ENCODE measurements at regions of chr10 and their contacts with region 1.

Region 1: DNA sequence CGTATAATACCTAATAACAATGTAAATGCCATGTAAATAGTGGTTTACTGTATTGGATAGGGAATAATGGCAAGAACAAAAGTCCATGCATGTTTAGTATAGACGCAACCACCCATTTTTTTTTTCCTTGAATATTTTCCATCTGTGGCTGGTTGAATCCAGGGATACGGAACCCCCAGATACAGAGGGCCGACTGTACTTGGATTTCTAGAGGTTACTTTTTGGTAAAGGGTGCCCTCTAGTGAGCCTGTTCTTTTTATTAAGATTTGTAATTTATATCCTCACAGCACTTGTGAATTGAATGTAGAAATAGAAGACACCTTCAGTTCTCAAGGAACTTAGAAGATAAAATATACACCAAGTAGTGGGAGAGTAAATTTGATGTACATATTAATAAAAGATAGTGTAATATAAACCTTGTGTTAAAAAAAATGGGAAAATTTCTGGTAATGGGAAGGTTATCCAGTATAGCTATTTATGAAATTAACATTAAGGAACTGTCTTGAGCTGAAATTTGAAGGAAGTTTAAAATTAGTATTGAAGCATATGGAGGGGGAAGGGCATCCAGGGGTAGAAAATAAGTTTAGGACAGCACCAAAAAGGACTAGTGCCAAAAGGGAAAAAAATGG is 32.0 kb downstream of the EXOC6 start:
- DNase-seq: no peak
- H3K4me3 ChIP-seq: no peak overlapping the region
- H3K27ac ChIP-seq: no peak overlapping the region
- H3K4me1 ChIP-seq: peaks cover 0 to 16% (median 6%) of the 10 kb centered on the region in 4 donors
- H3K27me3 ChIP-seq: no peaks in the 10 kb centered on the region
- CTCF ChIP-seq: peak; percentile 47 to 55 (median 55)
- EP300 ChIP-seq: no peak
- POLR2A ChIP-seq: no peak

Region 2: GRCh38 chr10:92517034-92517655 is 363.2 kb before region 1 on chr10:
- intact Hi-C with region 1: loop called (anchors 10 kb)
- DNase-seq: no peak
- H3K4me3 ChIP-seq: no peak overlapping the region
- H3K27ac ChIP-seq: no peak overlapping the region
- H3K4me1 ChIP-seq: peaks cover 0 to 2% (median 0%) of the 10 kb centered on the region in 4 donors
- H3K27me3 ChIP-seq: no peaks in the 10 kb centered on the region
- CTCF ChIP-seq: peak; percentile 74 to 81 (median 78)
- EP300 ChIP-seq: no peak
- POLR2A ChIP-seq: no peak

Region 3: GRCh38 chr10:92573798-92574547 is 306.4 kb before region 1 on chr10 and contains the start of gene IDE:
- intact Hi-C with region 1: loop called (anchors 10 kb)
- DNase-seq: peak; percentile 95
- H3K4me3 ChIP-seq: peak within 1 kb of the TSS; percentile 71 to 97 (median 86)
- H3K27ac ChIP-seq: peak within 1 kb of the TSS; percentile 86 to 95 (median 94)
- H3K4me1 ChIP-seq: peaks cover 21 to 37% (median 34%) of the 10 kb centered on the region in 4 donors
- H3K27me3 ChIP-seq: no peaks in the 10 kb centered on the region
- CTCF ChIP-seq: peak; percentile 71 to 91 (median 74)
- EP300 ChIP-seq: no peak
- POLR2A ChIP-seq: no peak
- total RNA-seq, gene IDE: 27.0 to 33.1 (median 30.7) TPM

Region 4: DNA sequence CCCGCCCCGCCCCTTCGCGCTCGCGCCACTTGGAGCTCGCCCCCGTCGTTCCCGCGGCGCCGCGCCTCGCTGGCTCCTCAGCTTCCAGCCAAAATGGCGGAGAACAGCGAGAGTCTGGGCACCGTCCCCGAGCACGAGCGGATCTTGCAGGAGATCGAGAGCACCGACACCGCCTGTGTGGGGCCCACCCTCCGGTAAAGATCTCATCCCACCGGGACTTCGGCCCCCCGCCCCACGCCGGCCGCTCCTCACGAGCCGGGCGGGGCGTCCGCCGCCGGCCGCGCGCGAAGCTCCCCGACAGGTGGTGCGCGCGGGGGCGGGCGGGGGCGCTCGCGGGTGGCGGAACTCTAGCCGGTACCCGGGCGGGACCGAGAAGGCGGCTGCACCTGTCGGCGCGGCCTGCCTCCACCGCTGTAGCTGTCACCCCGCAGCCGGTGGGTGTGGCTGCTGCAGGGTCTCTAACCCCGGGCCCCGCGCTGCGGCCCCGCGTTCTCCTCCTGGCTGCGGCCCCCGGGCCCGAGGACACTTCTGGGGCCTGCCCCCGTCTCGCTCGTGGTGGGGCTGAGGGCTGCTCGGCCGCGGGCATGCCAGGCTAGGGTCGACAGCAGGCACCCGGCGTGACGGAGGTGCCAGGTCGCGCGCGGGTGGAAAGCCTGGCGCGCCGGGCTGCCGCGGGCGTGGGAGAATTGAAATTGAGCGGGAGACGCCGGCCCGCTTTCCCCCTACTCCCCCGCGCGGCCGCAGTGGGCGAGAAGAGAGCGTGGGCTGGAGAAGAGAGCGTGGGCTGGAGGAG is 31.7 kb before region 1 on chr10 and contains the start of gene EXOC6:
- intact Hi-C with region 1: loop called (anchors 5 kb)
- DNase-seq: no peak
- H3K4me3 ChIP-seq: peak within 1 kb of the TSS; percentile 84 to 99 (median 94)
- H3K27ac ChIP-seq: peak within 1 kb of the TSS; percentile 83 to 91 (median 88)
- H3K4me1 ChIP-seq: peaks cover 5 to 23% (median 19%) of the 10 kb centered on the region in 4 donors
- H3K27me3 ChIP-seq: no peaks in the 10 kb centered on the region
- CTCF ChIP-seq: peak in 1 of 3 experiments; percentile 31
- EP300 ChIP-seq: no peak
- POLR2A ChIP-seq: no peak
- total RNA-seq, gene EXOC6: 14.1 to 34.9 (median 16.2) TPM

Region 5: GRCh38 chr10:92923416-92923815 is 43.1 kb after region 1 on chr10:
- intact Hi-C with region 1: no loop called
- DNase-seq: no peak
- H3K4me3 ChIP-seq: no peak overlapping the region
- H3K27ac ChIP-seq: no peak overlapping the region
- H3K4me1 ChIP-seq: no peaks in the 10 kb centered on the region
- H3K27me3 ChIP-seq: no peaks in the 10 kb centered on the region
- CTCF ChIP-seq: no peak
- EP300 ChIP-seq: no peak
- POLR2A ChIP-seq: no peak